CD4-positive, alpha-beta T cell (primary cell): ENCODE measurements at regions of chr14 and their contacts with region 1.

Region 1: DNA sequence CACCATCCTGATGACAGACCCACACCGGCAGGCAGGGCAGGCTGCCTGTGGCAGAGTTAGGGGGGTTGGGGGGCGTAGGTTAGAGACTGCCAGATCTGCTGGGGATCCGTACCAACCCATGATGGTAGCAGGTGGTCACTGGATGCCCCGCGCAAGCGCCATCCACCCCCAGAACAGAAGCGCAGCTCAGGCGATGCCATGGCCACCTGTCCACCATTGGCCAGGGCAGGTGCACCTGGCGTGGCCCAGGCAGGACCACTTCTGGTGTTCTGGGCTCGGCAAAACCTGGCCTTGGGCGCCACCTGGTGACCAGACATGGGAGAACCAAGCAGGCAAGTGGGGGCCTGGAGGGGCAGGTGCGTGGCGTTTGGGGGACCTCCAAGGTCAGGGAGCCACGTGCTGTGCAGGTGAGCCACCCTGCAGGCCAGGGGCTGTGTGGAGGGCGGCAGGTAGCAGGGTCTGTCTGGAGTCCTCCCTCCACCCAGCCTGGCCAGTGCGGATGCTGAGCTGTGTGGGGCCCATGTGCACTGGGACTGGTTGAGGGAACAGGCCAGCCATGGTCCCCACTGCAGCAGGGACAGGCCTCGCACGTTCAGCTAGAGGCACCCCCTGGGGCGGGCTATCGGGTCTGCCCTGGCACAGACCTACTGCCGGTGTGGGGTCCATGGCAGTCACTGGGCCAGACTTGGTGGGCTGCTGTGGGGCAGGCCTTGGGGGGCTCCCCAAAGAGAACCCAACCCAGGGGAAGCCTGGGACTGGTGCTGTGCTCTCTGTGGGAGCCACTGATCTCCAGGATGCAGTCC is 15.6 kb downstream of the BAG5 start:
- DNase-seq: peak; percentile 59 to 85 (median 71)
- ATAC-seq: peak; percentile 88
- H3K4me3 ChIP-seq: no peak overlapping the region
- H3K4me3 Mint-ChIP-seq: no peak overlapping the region
- H3K27ac ChIP-seq: no peak overlapping the region
- H3K27ac Mint-ChIP-seq: no peak overlapping the region
- H3K4me1 ChIP-seq: peaks cover 8% of the 10 kb centered on the region
- H3K4me1 Mint-ChIP-seq: no peaks in the 10 kb centered on the region
- H3K27me3 ChIP-seq: peaks cover 3 to 8% of the 10 kb centered on the region in 2 experiments
- H3K27me3 Mint-ChIP-seq: no peaks in the 10 kb centered on the region
- CTCF ChIP-seq: peak; percentile 92

Region 2: GRCh38 chr14:103500148-103500990 is 46.5 kb before region 1 on chr14:
- CTCF ChIA-PET with region 1: interaction called, 6 read pairs
- POLR2A ChIA-PET with region 1: no interaction called
- intact Hi-C with region 1: loop called (anchors 1 kb)
- DNase-seq: peak; percentile 68 to 88 (median 73)
- ATAC-seq: peak; percentile 93
- H3K4me3 ChIP-seq: no peak overlapping the region
- H3K4me3 Mint-ChIP-seq: no peak overlapping the region
- H3K27ac ChIP-seq: no peak overlapping the region
- H3K27ac Mint-ChIP-seq: peak overlapping the region; percentile 59
- H3K4me1 ChIP-seq: peaks cover 7% of the 10 kb centered on the region
- H3K4me1 Mint-ChIP-seq: peaks cover 16% of the 10 kb centered on the region
- H3K27me3 ChIP-seq: no peaks in the 10 kb centered on the region
- H3K27me3 Mint-ChIP-seq: no peaks in the 10 kb centered on the region
- CTCF ChIP-seq: peak; percentile 85

Region 3: DNA sequence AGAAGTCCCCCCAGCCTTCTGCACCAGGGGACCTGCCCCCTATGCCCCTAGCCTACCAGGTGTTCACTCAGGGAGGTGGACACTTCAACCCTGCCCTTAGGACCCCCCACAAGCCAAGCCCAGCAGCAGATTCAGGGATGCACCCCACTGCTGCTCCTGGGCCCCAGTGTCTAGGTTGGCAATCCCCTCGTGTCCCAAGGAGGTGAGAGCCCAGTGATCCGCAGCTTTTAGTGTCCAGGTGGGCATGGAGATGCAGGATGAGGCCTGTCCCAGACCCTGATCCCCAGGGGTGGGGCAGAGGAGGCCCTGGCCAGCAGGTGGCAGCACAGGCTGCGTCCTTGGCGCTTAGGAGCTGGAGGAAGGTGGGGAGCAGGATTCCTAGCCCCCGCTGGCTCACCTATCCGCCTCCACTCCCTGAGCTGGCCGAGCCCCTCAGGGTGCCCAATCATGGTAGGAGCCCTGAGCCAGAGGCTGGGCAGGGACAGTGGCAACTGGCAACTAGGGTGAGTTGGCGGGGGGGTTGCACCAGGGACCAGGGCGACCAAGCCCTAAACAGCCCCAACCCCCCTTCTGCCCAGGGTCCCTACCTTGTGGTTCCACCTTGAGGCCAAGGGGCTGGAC is 28.3 kb before region 1 on chr14:
- CTCF ChIA-PET with region 1: interaction called, 22 read pairs
- POLR2A ChIA-PET with region 1: interaction called, 4 read pairs
- intact Hi-C with region 1: loop called (anchors 1 kb)
- DNase-seq: peak; percentile 45 to 76 (median 56)
- ATAC-seq: peak; percentile 41
- H3K4me3 ChIP-seq: no peak overlapping the region
- H3K4me3 Mint-ChIP-seq: peak overlapping the region; percentile 25
- H3K27ac ChIP-seq: no peak overlapping the region
- H3K27ac Mint-ChIP-seq: no peak overlapping the region
- H3K4me1 ChIP-seq: peaks cover 42% of the 10 kb centered on the region
- H3K4me1 Mint-ChIP-seq: peaks cover 10% of the 10 kb centered on the region
- H3K27me3 ChIP-seq: peaks cover 9 to 18% of the 10 kb centered on the region in 2 experiments
- H3K27me3 Mint-ChIP-seq: peaks cover 17% of the 10 kb centered on the region
- CTCF ChIP-seq: peak; percentile 82